ENCODE measurements at regions of chr13 and their contacts with region 1.

Region 1: GRCh38 chr13:96817336-96817941 is 176.8 kb downstream of the OXGR1 start:
- DNase-seq: no peak
- ATAC-seq: no peak
- H3K4me3 ChIP-seq: no peak overlapping the region
- H3K27ac ChIP-seq: no peak overlapping the region
- H3K4me1 ChIP-seq: no peaks in the 10 kb centered on the region
- H3K27me3 ChIP-seq: no peaks in the 10 kb centered on the region
- CTCF ChIP-seq: peak in 8 of 9 donors; percentile 22 to 61 (median 47)

Region 2: DNA sequence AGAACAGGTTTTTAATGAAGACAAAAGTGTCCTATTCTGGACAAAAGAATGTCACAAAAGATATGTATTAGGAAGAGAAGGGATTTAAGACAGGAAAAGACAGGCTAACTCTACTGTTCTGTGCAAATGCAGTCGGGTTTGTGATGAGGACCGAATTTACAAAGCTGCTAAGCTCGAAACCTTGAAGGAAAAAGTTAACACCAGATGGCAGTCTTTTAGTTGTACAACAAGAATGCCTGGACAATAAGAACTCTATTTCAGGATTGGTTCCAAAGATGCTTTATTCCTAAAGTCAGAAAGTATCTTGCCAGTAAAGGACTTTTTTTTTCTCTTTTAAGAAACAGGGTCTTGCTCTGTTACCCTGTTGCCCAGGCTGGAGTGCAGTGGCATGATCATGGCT is 676.4 kb before region 1 on chr13:
- intact Hi-C with region 1: loop called in 1 of 10 experiments (anchors 10 kb)
- DNase-seq: no peak
- ATAC-seq: no peak
- H3K4me3 ChIP-seq: no peak overlapping the region
- H3K27ac ChIP-seq: no peak overlapping the region
- H3K4me1 ChIP-seq: peaks cover 0 to 4% (median 0%) of the 10 kb centered on the region in 9 donors
- H3K27me3 ChIP-seq: no peaks in the 10 kb centered on the region
- CTCF ChIP-seq: peak in 6 of 9 donors; percentile 7 to 46 (median 29)

Region 3: DNA sequence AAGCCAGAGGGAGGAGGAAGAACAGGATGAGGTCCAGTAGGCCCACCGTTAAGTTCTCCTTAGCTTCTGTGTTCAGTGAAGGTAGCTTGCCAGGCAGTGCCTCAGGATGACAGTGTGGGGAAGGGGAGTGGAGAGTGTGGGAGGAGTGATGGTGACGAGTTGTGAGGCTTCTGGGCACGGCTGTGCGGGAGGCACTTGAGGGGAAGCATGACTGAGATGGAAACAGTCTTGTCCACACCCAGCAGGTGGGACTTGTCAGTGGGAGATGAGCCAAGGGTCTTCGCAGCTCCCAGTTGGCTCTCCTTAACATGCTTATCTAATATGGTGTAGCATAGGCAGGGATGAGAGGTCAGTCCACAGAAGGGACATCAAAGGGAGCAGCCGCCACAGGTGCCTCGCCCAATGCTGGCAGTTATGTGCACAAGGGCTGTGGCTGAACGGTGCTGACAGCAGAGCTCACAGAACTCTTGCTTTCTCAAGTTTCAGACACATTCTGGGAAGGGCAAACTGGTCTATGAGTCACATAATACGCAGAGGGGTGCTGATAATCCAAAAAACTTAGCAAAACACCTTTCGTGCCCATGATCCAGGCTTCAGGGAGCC is 129.4 kb after region 1 on chr13:
- intact Hi-C with region 1: loop called in 1 of 10 experiments (anchors 10 kb)
- DNase-seq: no peak
- ATAC-seq: no peak
- H3K4me3 ChIP-seq: no peak overlapping the region
- H3K27ac ChIP-seq: no peak overlapping the region
- H3K4me1 ChIP-seq: no peaks in the 10 kb centered on the region
- H3K27me3 ChIP-seq: peaks cover 0 to 19% (median 0%) of the 10 kb centered on the region in 7 donors
- CTCF ChIP-seq: no peak

Region 4: GRCh38 chr13:97194479-97194878 is 377.0 kb after region 1 on chr13:
- intact Hi-C with region 1: no loop called
- DNase-seq: no peak
- ATAC-seq: no peak
- H3K4me3 ChIP-seq: no peak overlapping the region
- H3K27ac ChIP-seq: no peak overlapping the region
- H3K4me1 ChIP-seq: peaks cover 0 to 11% (median 0%) of the 10 kb centered on the region in 9 donors
- H3K27me3 ChIP-seq: no peaks in the 10 kb centered on the region
- CTCF ChIP-seq: no peak

Measured in heart right ventricle (tissue), 16 donors.